K562 (cell line): ENCODE measurements at regions of chr7 and their contacts with region 1.

Region 1: DNA sequence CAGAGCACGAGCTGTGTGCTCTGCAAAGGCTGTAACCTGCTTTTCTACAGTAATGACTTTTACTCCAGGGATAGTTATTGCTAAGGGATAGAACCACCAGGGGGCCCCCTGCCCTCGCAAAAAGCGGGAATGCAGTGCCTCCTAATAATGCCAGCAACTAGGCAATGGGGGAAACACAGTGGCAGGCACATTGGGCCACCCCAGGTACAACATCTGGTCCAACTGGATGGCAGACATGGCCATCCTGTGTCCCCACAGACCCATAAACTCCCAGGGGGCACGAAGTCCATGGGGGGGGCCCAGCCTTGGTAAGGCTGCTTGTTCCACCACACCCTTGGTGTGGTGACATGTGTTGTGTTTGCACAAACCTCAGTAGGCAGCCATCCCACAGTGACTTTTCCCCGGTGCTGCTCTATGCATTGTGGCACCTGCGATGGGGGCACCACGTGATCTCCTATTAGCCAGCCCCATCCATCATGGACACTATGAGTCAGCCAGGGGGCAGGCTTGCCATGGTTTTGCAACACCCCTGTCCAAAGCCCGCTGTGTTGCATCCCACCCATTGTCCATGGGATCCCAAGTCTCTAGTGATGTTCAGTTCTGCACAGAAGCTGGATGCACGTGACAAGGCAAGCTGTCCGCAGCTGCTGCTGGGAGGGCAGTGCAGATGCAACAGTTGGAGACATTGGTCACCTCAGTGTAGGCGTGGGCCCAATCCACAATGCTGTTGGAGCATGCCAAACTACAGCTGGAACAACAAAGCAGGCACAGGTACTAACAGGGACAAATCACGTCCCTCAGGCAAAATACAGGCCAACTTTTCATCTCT is 84.0 kb downstream of the ANLN start:
- DNase-seq: peak; percentile 51 to 70 (median 58)
- ATAC-seq: peak; percentile 90
- H3K4me3 ChIP-seq: no peak overlapping the region
- H3K27ac ChIP-seq: 0 out of 3 replicates have a peak overlapping the region, but pooled peaks have one; percentile 9
- H3K4me1 ChIP-seq: peaks cover 8 to 12% of the 10 kb centered on the region in 2 experiments; a peak in 3 of 5 replicates
- H3K27me3 ChIP-seq: no peaks in the 10 kb centered on the region; a peak in 1 of 5 replicates
- CTCF ChIP-seq: peak; percentile 81 to 88 (median 83)
- EP300 ChIP-seq: no peak
- POLR2A ChIP-seq: no peak
- RAD21 ChIP-seq: peak; percentile 85 to 91

Region 2: DNA sequence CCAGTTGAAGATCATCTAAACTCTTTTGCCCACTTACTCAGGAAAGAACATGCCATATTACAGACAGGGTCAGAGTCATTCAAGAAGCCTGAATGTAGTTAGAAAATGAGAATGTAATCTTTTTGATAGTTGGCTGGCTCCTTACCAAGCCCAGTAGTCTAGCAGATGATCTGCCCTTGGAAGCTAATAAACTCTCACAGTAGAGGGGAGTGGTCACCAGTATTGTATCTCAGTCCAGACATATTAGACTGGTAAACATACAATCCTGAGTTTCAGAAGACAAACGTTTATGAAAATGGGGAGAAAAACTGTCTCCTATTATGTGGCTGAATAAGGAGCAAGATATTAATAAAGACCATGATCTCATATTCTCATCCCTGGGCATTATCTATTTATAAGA is 607.5 kb before region 1 on chr7:
- CTCF ChIA-PET with region 1: no interaction called
- POLR2A ChIA-PET with region 1: no interaction called
- in situ Hi-C with region 1: no loop called
- intact Hi-C with region 1: no loop called
- DNase-seq: no peak
- ATAC-seq: no peak
- H3K4me3 ChIP-seq: no peak overlapping the region
- H3K27ac ChIP-seq: no peak overlapping the region
- H3K4me1 ChIP-seq: no peaks in the 10 kb centered on the region
- H3K27me3 ChIP-seq: no peaks in the 10 kb centered on the region
- CTCF ChIP-seq: no peak
- EP300 ChIP-seq: no peak
- POLR2A ChIP-seq: no peak
- RAD21 ChIP-seq: no peak

Region 3: DNA sequence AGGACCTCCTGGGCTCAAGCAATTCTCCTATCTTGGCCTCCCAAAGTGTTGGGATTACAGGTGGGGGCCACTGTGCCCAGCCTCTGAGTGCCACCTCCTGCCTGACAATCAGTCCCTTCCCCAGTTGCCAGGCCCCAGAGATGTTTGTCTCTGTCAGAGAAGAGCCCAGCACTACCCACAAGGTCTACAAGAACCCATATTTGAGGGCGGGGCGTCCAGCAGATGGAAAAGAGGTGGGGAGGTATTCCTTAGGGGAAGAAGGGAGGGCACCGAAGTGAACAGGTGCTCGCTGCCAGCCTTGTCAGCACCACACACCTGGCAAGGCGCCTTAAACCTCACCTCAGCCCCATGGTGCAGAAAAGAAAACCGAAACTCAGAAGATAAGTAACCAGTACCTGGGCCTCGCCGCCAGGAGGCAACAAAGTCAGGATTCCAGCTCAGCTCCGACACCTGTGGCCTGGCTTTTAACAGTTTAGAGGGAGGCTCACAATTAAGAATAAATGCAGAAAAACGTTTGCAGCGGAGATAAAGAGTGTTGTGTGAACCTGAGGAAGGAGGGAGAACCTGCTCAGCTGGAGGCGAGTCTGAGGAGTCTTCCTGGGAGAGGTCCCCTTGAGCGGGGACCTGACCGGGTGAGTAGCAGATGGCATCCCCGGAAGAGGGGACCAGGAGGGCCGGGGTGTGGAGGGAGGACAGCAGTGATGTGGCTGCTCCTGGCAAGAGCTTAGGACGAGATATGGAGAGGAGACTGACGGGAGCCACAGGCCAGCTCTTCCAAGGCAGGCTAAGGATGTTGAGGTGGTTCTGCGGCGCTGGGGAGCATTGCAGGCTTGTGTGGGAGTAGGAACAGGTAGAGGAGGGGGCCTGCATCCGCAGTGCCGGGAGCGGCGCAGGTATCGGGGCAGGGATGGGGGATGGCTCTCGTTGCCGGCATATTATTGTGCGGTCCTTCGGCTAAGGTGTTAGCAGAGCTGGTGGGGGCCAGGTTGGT is 161.0 kb before region 1 on chr7:
- CTCF ChIA-PET with region 1: no interaction called
- POLR2A ChIA-PET with region 1: no interaction called
- in situ Hi-C with region 1: no loop called
- intact Hi-C with region 1: loop called (anchors 5 kb)
- DNase-seq: peak; percentile 66 to 76 (median 70)
- ATAC-seq: peak; percentile 95
- H3K4me3 ChIP-seq: no peak overlapping the region
- H3K27ac ChIP-seq: no peak overlapping the region
- H3K4me1 ChIP-seq: peaks cover 0 to 8% of the 10 kb centered on the region in 2 experiments; a peak in 2 of 5 replicates
- H3K27me3 ChIP-seq: peaks cover 0 to 33% of the 10 kb centered on the region in 2 experiments; a peak in 2 of 5 replicates
- CTCF ChIP-seq: peak; percentile 83 to 89 (median 84)
- EP300 ChIP-seq: no peak
- POLR2A ChIP-seq: no peak
- RAD21 ChIP-seq: peak; percentile 55 to 73

Region 4: DNA sequence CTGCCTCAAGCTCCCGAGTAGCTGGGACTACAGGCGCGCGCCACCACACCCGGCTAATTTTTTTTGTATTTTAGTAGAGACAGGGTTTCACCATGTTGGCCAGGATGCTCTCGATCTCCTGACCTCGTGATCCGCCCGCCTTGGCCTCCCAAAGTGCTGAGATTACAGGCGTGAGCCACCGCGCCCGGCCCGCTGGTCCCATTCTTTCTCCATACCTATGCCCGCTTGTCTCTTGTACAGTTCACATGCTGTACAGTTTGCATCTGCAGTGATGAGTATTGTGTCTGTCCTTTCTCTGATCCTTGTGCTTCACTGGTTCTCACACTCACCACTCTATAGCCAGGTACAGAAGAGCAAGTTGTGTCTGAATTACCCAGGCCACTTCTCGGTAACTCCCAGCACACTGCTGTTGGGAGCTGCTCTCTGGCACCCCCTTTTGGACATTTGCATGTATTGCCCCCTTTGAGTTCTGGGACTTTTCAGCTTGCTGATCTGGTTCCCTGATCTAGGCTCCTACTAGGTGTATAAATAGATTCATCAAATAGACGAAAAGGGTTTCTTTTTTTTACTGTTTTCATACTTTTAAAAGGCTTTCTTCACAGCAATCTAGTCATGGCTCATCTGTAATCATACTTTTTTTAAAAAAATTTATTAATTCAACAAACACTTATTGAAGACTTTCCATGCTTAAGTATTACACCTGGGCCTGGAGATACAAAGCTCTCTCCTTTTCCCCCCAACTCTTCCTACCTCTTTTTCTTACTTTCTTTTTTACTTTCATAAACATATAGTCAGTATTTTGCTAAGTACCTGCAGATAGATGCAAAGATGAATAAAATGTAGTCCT is 197.1 kb after region 1 on chr7:
- CTCF ChIA-PET with region 1: interaction called, 14 read pairs
- POLR2A ChIA-PET with region 1: interaction called, 4 read pairs
- in situ Hi-C with region 1: loop called (anchors 5 kb)
- intact Hi-C with region 1: loop called (anchors 1 kb)
- DNase-seq: peak; percentile 73 to 80 (median 78)
- ATAC-seq: peak; percentile 99
- H3K4me3 ChIP-seq: no peak overlapping the region
- H3K27ac ChIP-seq: no peak overlapping the region
- H3K4me1 ChIP-seq: no peaks in the 10 kb centered on the region
- H3K27me3 ChIP-seq: peaks cover 0 to 3% of the 10 kb centered on the region in 2 experiments; a peak in 4 of 5 replicates
- CTCF ChIP-seq: peak; percentile 85 to 93 (median 92)
- EP300 ChIP-seq: no peak
- POLR2A ChIP-seq: no peak
- RAD21 ChIP-seq: peak; percentile 61 to 81

Region 5: DNA sequence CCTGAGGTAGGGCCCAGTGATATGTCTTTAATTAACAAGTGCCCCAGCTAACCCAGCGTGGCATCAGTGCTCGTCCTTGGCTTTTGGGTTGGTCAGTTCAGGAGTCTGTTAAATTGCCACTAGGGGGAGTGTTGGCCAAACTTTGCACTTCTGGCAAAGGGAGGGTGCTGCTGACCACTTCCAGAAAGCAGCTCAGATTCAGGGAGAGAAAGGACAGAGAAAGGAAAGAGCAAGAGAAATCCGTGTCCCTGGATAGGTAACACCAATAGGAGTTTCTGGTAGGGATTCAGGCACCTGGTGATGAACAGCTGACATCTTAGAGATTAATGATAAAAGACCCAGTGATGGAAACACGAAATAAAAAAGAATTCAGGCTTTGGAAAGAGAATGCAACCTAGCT is 493.7 kb after region 1 on chr7:
- CTCF ChIA-PET with region 1: no interaction called
- POLR2A ChIA-PET with region 1: no interaction called
- in situ Hi-C with region 1: no loop called
- intact Hi-C with region 1: loop called (anchors 5 kb)
- DNase-seq: peak; percentile 48 to 63 (median 61)
- ATAC-seq: peak; percentile 98
- H3K4me3 ChIP-seq: no peak overlapping the region
- H3K27ac ChIP-seq: no peak overlapping the region
- H3K4me1 ChIP-seq: no peaks in the 10 kb centered on the region
- H3K27me3 ChIP-seq: no peaks in the 10 kb centered on the region
- CTCF ChIP-seq: peak; percentile 68 to 79 (median 73)
- EP300 ChIP-seq: no peak
- POLR2A ChIP-seq: no peak
- RAD21 ChIP-seq: peak; percentile 51 to 65